HEK293 (cell line): ENCODE measurements at regions of chr11 and their contacts with region 1.

Region 1: GRCh38 chr11:18768472-18768901 is 23.1 kb downstream of the PTPN5 start:
- H3K4me3 ChIP-seq: no peak overlapping the region
- H3K27ac ChIP-seq: no peak overlapping the region
- H3K4me1 ChIP-seq: no peaks in the 10 kb centered on the region
- CTCF ChIP-seq: no peak

Region 2: GRCh38 chr11:18540207-18541009 is 228.1 kb before region 1 on chr11:
- CTCF ChIA-PET with region 1: interaction called, 14 read pairs
- POLR2A ChIA-PET with region 1: no interaction called
- H3K4me3 ChIP-seq: no peak overlapping the region
- H3K27ac ChIP-seq: no peak overlapping the region
- H3K4me1 ChIP-seq: no peaks in the 10 kb centered on the region
- CTCF ChIP-seq: no peak

Region 3: DNA sequence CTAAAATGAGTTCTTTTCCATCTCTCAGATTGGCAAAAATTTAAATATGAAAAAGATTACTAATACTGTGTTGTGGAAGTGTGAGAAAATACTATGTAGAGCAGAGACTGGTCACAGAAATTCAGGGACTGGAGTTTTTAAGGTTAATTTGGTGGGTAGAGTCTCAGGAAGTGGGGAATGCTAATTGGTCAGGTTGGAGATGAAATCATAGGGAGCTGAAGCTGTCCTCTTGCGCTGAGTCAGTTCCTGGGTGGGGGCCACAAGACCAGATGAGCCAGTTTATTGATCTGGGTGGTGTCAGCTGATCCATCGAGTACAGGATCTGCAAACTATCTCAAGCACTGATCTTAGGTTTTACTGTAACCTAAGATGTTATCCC is 99.3 kb before region 1 on chr11:
- CTCF ChIA-PET with region 1: no interaction called
- POLR2A ChIA-PET with region 1: no interaction called
- H3K4me3 ChIP-seq: no peak overlapping the region
- H3K27ac ChIP-seq: no peak overlapping the region
- H3K4me1 ChIP-seq: no peaks in the 10 kb centered on the region
- CTCF ChIP-seq: no peak

Region 4: GRCh38 chr11:18785411-18785810 is 16.9 kb after region 1 on chr11:
- CTCF ChIA-PET with region 1: interaction called, 15 read pairs
- POLR2A ChIA-PET with region 1: no interaction called
- H3K4me3 ChIP-seq: no peak overlapping the region
- H3K27ac ChIP-seq: no peak overlapping the region
- H3K4me1 ChIP-seq: no peaks in the 10 kb centered on the region
- CTCF ChIP-seq: no peak

Region 5: DNA sequence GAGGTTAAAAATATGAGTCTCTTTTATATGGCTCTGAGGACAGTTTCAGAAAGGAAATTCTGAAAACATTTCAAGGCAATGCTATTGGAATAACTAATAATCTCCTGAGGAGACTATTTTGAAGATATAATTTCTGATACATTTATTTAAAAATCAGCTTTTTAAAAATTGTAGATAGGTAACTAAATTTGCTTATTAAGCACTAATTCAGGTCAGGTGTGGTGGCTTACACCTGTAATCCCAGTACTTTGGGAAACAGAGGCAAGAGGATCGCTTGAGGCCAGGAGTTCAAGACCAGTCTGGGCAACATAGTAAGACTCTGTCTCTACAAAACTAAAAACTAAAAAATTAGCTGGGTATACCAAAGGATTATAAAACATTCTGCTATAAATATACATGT is 365.5 kb after region 1 on chr11:
- CTCF ChIA-PET with region 1: no interaction called
- POLR2A ChIA-PET with region 1: no interaction called
- H3K4me3 ChIP-seq: no peak overlapping the region
- H3K27ac ChIP-seq: no peak overlapping the region
- H3K4me1 ChIP-seq: no peaks in the 10 kb centered on the region
- CTCF ChIP-seq: no peak